ENCODE measurements at regions of chr22 and their contacts with region 1.

Region 1: DNA sequence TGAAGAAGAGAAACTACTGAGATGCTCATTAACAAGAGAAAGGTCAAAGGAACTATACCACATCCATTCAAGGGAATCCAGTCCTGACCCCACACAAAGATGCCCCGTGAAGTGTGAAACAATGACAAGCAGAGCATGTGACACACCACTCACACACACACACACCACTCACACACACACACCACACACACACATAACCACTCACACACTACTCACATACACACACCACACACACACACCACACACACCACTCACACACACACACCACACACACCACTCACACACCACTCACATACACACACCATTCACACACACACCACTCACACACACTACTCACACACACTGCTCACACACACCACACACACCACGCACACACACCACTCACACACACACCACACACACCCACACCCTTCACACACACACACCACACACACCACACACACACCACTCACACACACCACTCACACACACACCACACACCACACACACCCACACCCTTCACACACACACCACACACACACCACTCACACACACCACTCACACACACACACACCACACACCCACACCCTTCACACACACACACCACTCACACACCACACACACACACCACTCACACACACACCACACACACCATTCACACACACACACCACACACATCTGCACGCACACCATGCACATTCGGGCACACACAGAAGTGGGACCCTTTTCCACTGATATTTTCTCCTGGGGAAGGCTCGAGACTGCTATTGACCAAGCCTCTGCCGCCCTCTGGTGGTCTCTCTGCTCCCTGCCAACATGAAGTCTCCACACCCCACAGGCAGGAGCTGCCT is 32.0 kb upstream of the COMT start:
- DNase-seq: peak; percentile 44 to 90
- H3K4me3 ChIP-seq: no peak overlapping the region
- H3K27ac ChIP-seq: peak overlapping the region; percentile 40
- H3K4me1 ChIP-seq: no peaks in the 10 kb centered on the region; a peak in 2 of 7 replicates
- H3K27me3 ChIP-seq: no peaks in the 10 kb centered on the region
- CTCF ChIP-seq: peak; percentile 90 to 94 (median 93)
- EP300 ChIP-seq: no peak
- POLR2A ChIP-seq: no peak
- RAD21 ChIP-seq: peak; percentile 97 to 98

Region 2: DNA sequence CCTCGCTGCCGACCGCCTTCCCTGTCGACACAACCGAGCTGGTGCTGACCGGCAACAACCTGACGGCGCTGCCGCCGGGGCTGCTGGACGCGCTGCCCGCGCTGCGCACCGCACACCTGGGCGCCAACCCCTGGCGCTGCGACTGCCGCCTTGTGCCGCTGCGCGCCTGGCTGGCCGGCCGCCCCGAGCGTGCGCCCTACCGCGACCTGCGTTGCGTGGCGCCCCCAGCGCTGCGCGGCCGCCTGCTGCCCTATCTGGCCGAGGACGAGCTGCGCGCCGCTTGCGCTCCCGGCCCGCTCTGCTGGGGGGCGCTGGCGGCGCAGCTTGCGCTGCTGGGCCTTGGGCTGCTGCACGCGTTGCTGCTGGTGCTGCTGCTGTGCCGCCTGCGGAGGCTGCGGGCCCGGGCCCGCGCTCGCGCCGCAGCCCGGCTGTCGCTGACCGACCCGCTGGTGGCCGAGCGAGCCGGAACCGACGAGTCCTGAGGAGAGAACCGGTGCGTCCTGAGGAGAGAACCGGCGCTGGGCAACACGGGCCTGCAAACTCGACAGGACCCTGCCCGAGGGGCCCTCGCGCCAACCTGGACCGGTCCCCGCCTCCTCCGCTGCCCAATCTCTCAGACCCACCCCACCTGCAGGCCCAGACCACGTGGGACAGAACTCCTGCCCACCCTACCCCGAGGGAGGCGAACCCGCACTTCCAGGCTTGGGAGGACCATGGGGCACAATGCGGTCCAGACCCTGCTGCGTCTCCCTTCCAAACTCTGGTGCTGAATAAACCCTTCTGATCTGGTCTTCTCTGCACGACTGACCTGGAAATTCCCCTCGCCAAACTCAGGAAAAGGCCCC is 185.4 kb before region 1 on chr22:
- CTCF ChIA-PET with region 1: interaction called, 145 read pairs
- POLR2A ChIA-PET with region 1: no interaction called
- DNase-seq: peak in 1 of 2 experiments; percentile 79
- H3K4me3 ChIP-seq: peak overlapping the region in 3 of 4 experiments; percentile 25 to 55 (median 32); a peak in 5 of 8 replicates
- H3K27ac ChIP-seq: no peak overlapping the region
- H3K4me1 ChIP-seq: peaks cover 0 to 33% (median 20%) of the 10 kb centered on the region in 4 experiments; a peak in 6 of 7 replicates
- H3K27me3 ChIP-seq: peaks cover 80 to 100% (median 97%) of the 10 kb centered on the region in 4 experiments
- CTCF ChIP-seq: peak; percentile 59 to 89 (median 76)
- EP300 ChIP-seq: no peak
- POLR2A ChIP-seq: no peak
- RAD21 ChIP-seq: peak; percentile 47 to 77

Region 3: DNA sequence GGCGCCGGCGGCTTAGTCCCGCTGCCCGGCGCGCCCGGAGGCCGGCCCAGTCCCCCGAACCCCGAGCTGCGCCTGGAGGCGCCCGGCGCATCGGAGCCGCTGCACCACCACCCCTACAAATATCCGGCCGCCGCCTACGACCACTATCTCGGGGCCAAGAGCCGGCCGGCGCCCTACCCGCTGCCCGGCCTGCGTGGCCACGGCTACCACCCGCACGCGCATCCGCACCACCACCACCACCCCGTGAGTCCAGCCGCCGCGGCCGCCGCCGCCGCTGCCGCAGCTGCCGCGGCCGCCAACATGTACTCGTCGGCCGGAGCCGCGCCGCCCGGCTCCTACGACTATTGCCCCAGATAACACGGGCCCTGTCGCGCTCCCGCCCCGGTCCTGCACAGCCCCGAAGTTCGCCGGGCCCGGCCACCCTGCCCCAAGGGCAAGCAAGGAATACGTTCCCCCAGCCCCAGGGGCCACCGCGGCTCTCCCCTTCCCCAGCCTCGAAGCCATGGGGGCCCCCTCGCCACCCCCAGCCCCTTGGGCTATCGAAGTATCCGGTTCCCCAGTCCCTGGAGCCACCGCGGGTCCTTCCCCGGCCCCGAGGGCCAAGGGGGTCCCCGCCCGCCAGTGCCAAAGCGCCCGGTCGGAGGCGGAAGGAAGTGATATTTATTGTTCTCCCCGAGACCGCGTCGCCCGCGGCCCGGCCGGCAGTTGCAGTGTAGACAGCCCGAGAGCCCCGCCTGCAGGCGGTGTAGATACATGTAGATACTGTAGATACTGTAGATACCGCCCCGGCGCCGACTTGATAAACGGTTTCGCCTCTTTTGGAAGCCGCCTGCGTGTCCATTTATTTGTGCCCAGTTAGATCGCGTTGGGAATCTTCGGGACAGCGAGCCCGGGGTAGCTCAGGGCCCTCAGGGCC is 142.8 kb before region 1 on chr22:
- CTCF ChIA-PET with region 1: interaction called, 22 read pairs
- POLR2A ChIA-PET with region 1: interaction called, 3 read pairs
- DNase-seq: peak in 1 of 2 experiments; percentile 87
- H3K4me3 ChIP-seq: peak overlapping the region in 2 of 4 experiments; percentile 6 to 44; a peak in 3 of 8 replicates
- H3K27ac ChIP-seq: no peak overlapping the region
- H3K4me1 ChIP-seq: peaks cover 0 to 45% (median 32%) of the 10 kb centered on the region in 4 experiments; a peak in 6 of 7 replicates
- H3K27me3 ChIP-seq: peaks cover 79 to 95% (median 93%) of the 10 kb centered on the region in 4 experiments
- CTCF ChIP-seq: peak; percentile 29 to 52 (median 39)
- EP300 ChIP-seq: no peak
- POLR2A ChIP-seq: no peak
- RAD21 ChIP-seq: peak; percentile 46 to 49

Region 4: DNA sequence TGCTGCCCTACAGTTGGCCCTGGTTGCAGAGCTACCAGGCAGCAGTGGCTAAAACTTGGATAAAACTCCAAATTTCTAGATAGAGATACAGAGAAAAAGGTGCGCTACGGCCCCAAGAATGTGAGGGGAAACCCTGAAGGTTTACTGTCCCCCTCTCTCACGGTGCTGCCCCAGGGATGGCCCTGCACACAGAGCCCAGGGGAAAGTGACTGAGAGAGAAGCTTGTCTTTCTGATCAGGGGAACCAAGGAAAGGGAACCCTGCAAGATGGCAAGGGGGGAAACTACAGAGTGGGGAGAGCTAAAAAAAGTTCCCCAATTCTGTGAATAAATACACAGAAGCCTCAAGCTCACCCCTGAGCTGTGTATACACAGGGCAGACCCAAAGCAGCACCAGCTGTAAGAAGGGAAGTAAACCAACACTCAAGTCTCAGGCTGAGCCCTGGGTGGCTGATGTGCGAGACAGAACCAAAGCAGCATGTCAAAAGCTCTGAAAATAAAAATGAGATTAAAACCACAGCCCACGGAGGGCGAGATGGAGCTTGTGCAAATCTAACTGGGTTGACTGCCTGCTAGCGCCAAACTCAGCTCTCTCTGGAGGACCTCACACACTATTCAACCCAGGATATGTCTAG is 77.0 kb before region 1 on chr22:
- CTCF ChIA-PET with region 1: interaction called, 10 read pairs
- POLR2A ChIA-PET with region 1: no interaction called
- DNase-seq: peak in 1 of 2 experiments; percentile 39
- H3K4me3 ChIP-seq: no peak overlapping the region
- H3K27ac ChIP-seq: no peak overlapping the region
- H3K4me1 ChIP-seq: no peaks in the 10 kb centered on the region
- H3K27me3 ChIP-seq: no peaks in the 10 kb centered on the region
- CTCF ChIP-seq: no peak
- EP300 ChIP-seq: no peak
- POLR2A ChIP-seq: no peak
- RAD21 ChIP-seq: no peak

Region 5: GRCh38 chr22:19948057-19948760 is 38.6 kb after region 1 on chr22:
- CTCF ChIA-PET with region 1: interaction called, 34 read pairs
- POLR2A ChIA-PET with region 1: no interaction called
- DNase-seq: no peak
- H3K4me3 ChIP-seq: no peak overlapping the region
- H3K27ac ChIP-seq: no peak overlapping the region
- H3K4me1 ChIP-seq: peaks cover 0 to 1% (median under 1%) of the 10 kb centered on the region in 4 experiments; a peak in 3 of 7 replicates
- H3K27me3 ChIP-seq: no peaks in the 10 kb centered on the region; a peak in 1 of 7 replicates
- CTCF ChIP-seq: no peak
- EP300 ChIP-seq: no peak
- POLR2A ChIP-seq: no peak
- RAD21 ChIP-seq: no peak

Region 6: GRCh38 chr22:19974241-19974861 is 64.8 kb after region 1 on chr22:
- CTCF ChIA-PET with region 1: no interaction called
- POLR2A ChIA-PET with region 1: no interaction called
- DNase-seq: peak; percentile 86 to 90
- H3K4me3 ChIP-seq: no peak overlapping the region; a peak in 1 of 8 replicates
- H3K27ac ChIP-seq: peak overlapping the region; percentile 81
- H3K4me1 ChIP-seq: peaks cover 3 to 15% (median 13%) of the 10 kb centered on the region in 4 experiments; a peak in 6 of 7 replicates
- H3K27me3 ChIP-seq: no peaks in the 10 kb centered on the region
- CTCF ChIP-seq: no peak
- EP300 ChIP-seq: no peak
- POLR2A ChIP-seq: no peak
- RAD21 ChIP-seq: no peak

Measured in H1 (cell line).